ENCODE measurements at regions of chr7 and their contacts with region 1.

Region 1: GRCh38 chr7:151759591-151760042 is 117.3 kb downstream of the PRKAG2 start:
- DNase-seq: peak; percentile 60
- H3K4me3 ChIP-seq: no peak overlapping the region
- H3K27ac ChIP-seq: no peak overlapping the region
- H3K4me1 ChIP-seq: peaks cover 17% of the 10 kb centered on the region
- H3K27me3 ChIP-seq: peaks cover 0 to 1% of the 10 kb centered on the region in 2 experiments
- CTCF ChIP-seq: peak; percentile 80 to 86
- POLR2A ChIP-seq: no peak

Region 2: DNA sequence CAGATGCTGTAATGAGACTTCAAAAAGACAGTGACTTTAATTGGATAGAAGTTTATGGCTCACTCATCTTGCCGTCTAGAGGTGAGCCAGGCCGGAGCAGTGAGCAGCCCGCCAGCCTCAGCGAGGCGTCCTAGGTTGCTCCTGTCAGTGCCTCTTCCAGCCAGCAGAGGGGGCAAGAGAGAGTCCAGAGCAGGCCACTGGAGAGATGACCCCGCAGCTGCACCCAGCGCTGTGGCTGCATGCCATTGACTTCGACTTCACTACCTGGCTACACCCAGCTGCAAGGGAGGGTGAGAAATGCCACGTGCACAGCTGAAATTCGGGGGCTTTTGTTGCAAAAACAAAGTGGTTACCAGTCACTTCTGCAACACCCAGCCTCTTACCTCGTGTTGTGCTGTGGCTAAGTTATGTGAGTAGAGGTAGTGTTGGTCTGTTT is 391.5 kb before region 1 on chr7:
- CTCF ChIA-PET with region 1: interaction called, 11 read pairs
- POLR2A ChIA-PET with region 1: no interaction called
- dilution Hi-C with region 1: no loop called
- intact Hi-C with region 1: loop called (anchors 1 kb)
- DNase-seq: peak; percentile 71
- H3K4me3 ChIP-seq: no peak overlapping the region
- H3K27ac ChIP-seq: no peak overlapping the region
- H3K4me1 ChIP-seq: no peaks in the 10 kb centered on the region
- H3K27me3 ChIP-seq: no peaks in the 10 kb centered on the region
- CTCF ChIP-seq: peak; percentile 97 to 99
- POLR2A ChIP-seq: no peak

Region 3: DNA sequence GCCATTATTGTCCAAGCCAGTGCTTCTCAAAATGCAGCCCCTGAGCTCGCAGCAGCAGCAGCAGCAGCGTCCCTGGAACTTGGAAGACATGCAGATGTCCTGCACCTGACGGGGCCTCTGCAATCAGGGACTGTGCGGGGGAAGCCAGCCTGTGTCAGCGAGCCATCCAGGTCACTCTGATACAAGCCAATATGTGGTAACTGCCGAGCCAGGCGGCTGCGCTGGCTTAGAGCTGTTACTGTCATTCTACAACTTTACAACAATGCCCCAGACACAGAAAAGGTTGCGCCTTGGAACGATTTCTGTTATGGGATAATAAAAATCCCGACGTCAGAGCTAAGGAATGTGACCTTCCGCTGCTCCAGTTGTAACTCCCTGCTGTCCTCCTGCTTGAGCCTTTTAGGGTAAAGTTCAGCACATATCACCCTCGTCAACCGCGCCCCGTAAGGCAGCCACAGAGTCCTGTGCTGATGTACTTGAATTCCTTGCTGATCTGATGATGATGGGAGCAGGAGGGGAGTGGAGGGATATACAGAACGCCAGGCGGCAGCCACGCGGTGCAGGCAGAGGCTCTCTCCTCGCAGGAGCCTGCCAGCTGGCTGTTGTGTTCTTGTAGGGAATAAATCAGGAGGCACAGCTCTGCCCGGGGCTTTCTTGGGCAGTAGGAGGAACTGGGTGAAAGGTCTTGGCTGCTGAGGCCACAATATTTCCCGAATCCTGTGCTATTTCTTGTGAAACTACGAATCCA is 299.7 kb before region 1 on chr7:
- CTCF ChIA-PET with region 1: interaction called, 3 read pairs
- POLR2A ChIA-PET with region 1: no interaction called
- dilution Hi-C with region 1: no loop called
- intact Hi-C with region 1: loop called (anchors 2 kb)
- DNase-seq: peak; percentile 86
- H3K4me3 ChIP-seq: peak overlapping the region in 1 of 3 experiments; percentile 17
- H3K27ac ChIP-seq: peak overlapping the region; percentile 34
- H3K4me1 ChIP-seq: peaks cover 22% of the 10 kb centered on the region
- H3K27me3 ChIP-seq: no peaks in the 10 kb centered on the region
- CTCF ChIP-seq: peak in 1 of 2 donors; percentile 17
- POLR2A ChIP-seq: no peak

Region 4: GRCh38 chr7:151570366-151570915 is 189.2 kb before region 1 on chr7:
- CTCF ChIA-PET with region 1: interaction called, 22 read pairs
- POLR2A ChIA-PET with region 1: no interaction called
- dilution Hi-C with region 1: no loop called
- intact Hi-C with region 1: loop called (anchors 1 kb)
- DNase-seq: peak; percentile 61
- H3K4me3 ChIP-seq: no peak overlapping the region
- H3K27ac ChIP-seq: no peak overlapping the region
- H3K4me1 ChIP-seq: no peaks in the 10 kb centered on the region
- H3K27me3 ChIP-seq: no peaks in the 10 kb centered on the region
- CTCF ChIP-seq: peak; percentile 37
- POLR2A ChIP-seq: no peak

Region 5: GRCh38 chr7:151705636-151706276 is 53.9 kb before region 1 on chr7:
- CTCF ChIA-PET with region 1: interaction called, 4 read pairs
- POLR2A ChIA-PET with region 1: no interaction called
- dilution Hi-C with region 1: no loop called
- intact Hi-C with region 1: loop called (anchors 1 kb)
- DNase-seq: peak; percentile 60
- H3K4me3 ChIP-seq: no peak overlapping the region
- H3K27ac ChIP-seq: no peak overlapping the region
- H3K4me1 ChIP-seq: no peaks in the 10 kb centered on the region
- H3K27me3 ChIP-seq: no peaks in the 10 kb centered on the region
- CTCF ChIP-seq: peak; percentile 48 to 61
- POLR2A ChIP-seq: no peak